Right lobe of liver (tissue), 6 donors: ENCODE measurements at regions of chr20 and their contacts with region 1.

Region 1: GRCh38 chr20:22339091-22339881 is 245.1 kb downstream of the FOXA2 start:
- DNase-seq: peak in 1 of 3 donors; percentile 51
- ATAC-seq: peak; percentile 63 to 83 (median 79)
- H3K4me3 ChIP-seq: no peak overlapping the region
- H3K27ac ChIP-seq: no peak overlapping the region
- H3K4me1 ChIP-seq: no peaks in the 10 kb centered on the region
- H3K27me3 ChIP-seq: no peaks in the 10 kb centered on the region
- CTCF ChIP-seq: peak; percentile 70 to 91 (median 73)
- POLR2A ChIP-seq: no peak

Region 2: GRCh38 chr20:22182148-22182547 is 157.1 kb before region 1 on chr20:
- intact Hi-C with region 1: no loop called
- DNase-seq: no peak
- ATAC-seq: no peak
- H3K4me3 ChIP-seq: no peak overlapping the region
- H3K27ac ChIP-seq: no peak overlapping the region
- H3K4me1 ChIP-seq: no peaks in the 10 kb centered on the region
- H3K27me3 ChIP-seq: no peaks in the 10 kb centered on the region
- CTCF ChIP-seq: no peak
- POLR2A ChIP-seq: no peak

Region 3: DNA sequence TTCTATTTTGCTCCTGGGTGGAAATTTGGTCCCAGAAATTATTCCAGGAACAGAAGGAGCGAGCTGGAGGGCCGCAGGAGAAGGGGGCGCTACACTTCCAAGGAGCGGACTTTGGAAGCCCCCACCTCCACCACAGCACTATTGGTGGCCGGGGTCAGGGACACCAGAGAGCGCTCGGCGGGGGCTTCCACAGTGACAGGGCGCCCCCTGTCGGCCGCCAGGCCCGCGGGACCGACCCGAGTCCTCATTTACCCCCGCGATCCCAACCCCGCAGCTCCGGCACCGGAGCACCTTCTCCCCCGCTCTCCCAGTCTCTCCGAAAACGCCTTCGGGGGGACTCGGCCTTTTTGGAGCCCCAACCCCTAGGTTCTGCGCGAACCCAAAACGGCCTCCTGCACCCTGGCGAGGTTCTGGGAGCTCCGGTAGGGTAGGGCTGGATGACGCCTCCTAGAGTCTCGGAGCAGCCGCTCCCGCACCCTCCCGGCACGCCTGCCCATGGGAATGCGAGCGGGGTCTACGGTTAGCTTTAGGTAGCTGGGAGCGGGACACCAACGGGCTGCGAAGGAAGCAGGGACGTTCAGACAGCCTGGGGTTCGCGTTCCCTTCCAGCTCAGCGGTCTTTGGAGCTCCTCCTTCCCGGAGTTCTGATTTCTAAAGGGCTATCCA is 247.5 kb after region 1 on chr20:
- intact Hi-C with region 1: no loop called
- DNase-seq: peak; percentile 78 to 83 (median 81)
- ATAC-seq: peak; percentile 31 to 60 (median 54)
- H3K4me3 ChIP-seq: peak overlapping the region; percentile 41 to 58 (median 57)
- H3K27ac ChIP-seq: peak overlapping the region in 2 of 3 donors; percentile 3 to 49
- H3K4me1 ChIP-seq: peaks cover 0 to 11% (median 5%) of the 10 kb centered on the region in 4 donors
- H3K27me3 ChIP-seq: no peaks in the 10 kb centered on the region
- CTCF ChIP-seq: peak; percentile 75 to 92 (median 86)
- POLR2A ChIP-seq: no peak

Region 4: DNA sequence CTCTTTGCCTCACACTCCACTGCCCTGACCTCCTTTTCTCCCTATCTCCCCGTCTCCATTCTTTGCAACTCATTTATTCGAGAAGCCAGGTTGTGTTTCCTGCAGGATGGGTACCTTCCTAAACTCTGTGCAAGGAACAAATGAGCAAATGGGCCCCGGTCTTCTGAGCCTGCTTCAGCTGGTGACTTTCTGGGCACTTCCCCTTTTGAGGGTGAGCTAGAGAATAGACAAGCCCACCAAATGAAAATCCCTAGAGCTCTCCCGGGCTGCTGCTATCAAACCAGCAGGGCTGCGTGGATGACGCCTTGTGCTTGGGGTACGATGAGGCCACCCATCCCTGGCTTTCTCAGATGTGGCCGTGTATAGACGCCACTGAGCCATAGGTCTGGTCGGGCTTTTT is 336.1 kb after region 1 on chr20:
- intact Hi-C with region 1: loop called (anchors 5 kb)
- DNase-seq: no peak
- ATAC-seq: no peak
- H3K4me3 ChIP-seq: no peak overlapping the region
- H3K27ac ChIP-seq: no peak overlapping the region
- H3K4me1 ChIP-seq: no peaks in the 10 kb centered on the region
- H3K27me3 ChIP-seq: no peaks in the 10 kb centered on the region
- CTCF ChIP-seq: no peak
- POLR2A ChIP-seq: no peak